T47D (cell line): ENCODE measurements at regions of chr7 and their contacts with region 1.

Region 1: DNA sequence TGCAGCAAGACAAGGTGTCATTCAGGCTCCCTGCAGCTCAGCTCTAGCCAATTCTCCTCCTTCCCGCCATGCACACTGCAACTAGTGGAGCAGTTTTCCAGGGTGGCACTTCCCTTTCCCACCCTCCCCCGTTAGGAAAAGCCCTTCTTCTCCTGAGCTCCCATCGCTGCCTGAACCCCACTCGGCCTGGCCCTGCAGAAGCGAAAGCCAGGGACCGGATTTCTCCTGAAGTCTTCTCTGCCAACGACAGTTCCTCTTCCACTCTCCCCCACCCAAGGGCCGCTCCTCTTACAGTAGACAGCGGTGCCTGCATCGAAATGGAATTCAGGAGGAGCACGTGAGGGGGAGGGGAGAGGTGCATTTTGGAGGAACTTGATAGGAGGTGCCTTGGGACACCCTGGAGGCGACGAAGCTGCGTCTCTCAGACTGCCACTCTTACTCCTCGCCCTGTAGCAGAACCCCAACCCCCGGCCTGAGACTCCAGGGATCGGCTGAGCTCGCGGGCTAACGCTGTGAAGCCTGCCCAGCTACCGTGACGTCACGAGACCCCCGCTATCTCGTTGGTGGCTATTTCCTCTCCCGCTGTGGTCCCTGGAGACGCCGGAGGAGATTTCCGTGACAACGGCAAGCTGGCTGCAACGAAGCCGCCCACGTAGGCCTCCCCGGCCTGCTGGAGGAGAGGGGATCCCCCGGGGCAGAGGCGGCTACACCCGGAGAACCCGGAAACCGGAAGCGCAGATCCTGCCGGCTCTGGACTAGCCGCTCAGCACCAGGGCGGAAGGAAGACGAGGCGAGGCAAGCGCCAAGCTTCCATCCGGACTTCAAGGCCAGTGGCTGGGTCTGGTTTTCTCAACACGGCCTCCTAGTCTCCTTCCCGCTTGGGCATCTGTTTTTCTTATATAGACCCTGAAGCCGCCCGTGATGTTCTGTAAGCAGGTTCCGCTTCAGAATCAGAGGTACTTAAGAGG is 109.7 kb downstream of the RALA start:
- DNase-seq: peak; percentile 66 to 92

Region 2: GRCh38 chr7:39517240-39517639 is 215.9 kb before region 1 on chr7:
- in situ Hi-C with region 1: no loop called
- DNase-seq: no peak

Region 3: DNA sequence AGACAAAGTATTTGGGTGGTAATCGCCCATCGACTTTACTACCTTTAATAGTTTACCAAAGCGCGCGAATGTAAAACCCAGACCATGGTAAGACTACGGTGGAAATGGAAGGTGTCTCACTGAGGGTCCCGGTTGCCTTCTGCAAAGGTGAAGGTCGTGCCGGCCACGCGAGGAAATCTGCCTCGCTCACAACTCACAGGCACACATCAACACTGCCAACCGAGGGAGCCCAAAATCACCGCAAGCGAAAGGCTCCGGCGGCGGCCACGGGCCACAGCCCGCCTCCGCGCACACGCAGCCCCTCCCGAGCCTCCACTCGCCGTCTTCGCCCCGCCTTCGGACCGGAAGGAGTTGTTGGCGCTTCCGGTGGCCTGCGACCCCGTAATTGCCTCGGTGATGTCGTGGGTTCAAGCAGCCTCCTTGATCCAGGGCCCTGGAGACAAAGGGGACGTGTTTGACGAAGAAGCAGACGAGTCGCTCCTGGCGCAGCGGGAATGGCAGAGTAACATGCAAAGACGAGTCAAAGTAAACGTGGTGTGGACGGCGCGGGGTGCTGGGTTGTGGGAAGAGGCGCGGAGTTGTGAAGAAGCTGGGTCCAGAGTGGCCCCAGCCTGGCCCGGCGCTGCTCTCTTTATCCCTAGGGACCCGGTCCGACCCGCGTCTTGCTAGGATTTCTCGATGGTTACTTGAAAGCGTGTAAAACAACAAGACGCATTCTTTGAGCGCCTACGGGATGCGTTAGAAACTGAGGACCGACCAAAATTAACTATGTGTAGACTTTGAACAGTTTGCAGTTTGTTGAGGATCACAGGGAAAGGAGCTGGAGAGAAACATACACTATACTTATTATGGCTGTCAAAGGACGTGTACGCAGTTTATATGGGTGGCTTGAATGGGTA is 166.8 kb before region 1 on chr7 and contains the start of gene YAE1:
- in situ Hi-C with region 1: loop called (anchors 25 kb)
- DNase-seq: peak; percentile 86 to 88

Region 4: GRCh38 chr7:39910108-39910869 is 177.2 kb after region 1 on chr7:
- in situ Hi-C with region 1: no loop called
- DNase-seq: no peak